ENCODE measurements at regions of chr16 and their contacts with region 1.

Region 1: GRCh38 chr16:19179546-19180490 is 11.8 kb downstream of the SYT17 start:
- DNase-seq: peak; percentile 75
- H3K4me3 Mint-ChIP-seq: no peak overlapping the region
- H3K27ac Mint-ChIP-seq: no peak overlapping the region
- H3K4me1 Mint-ChIP-seq: peaks cover 21% of the 10 kb centered on the region
- H3K27me3 Mint-ChIP-seq: no peaks in the 10 kb centered on the region
- CTCF ChIP-seq: peak; percentile 64

Region 2: GRCh38 chr16:19375561-19376158 is 195.8 kb after region 1 on chr16:
- CTCF ChIA-PET with region 1: interaction called, 3 read pairs
- intact Hi-C with region 1: loop called (anchors 5 kb)
- DNase-seq: peak; percentile 60
- H3K4me3 Mint-ChIP-seq: no peak overlapping the region
- H3K27ac Mint-ChIP-seq: no peak overlapping the region
- H3K4me1 Mint-ChIP-seq: no peaks in the 10 kb centered on the region
- H3K27me3 Mint-ChIP-seq: no peaks in the 10 kb centered on the region
- CTCF ChIP-seq: peak; percentile 89

Measured in Calu3 (cell line).